ENCODE measurements at regions of chr1 and their contacts with region 1.

Region 1: GRCh38 chr1:44072204-44072603 is 40.9 kb upstream of the SLC6A9 start:
- DNase-seq: peak in 1 of 2 experiments; percentile 40
- H3K4me3 ChIP-seq: no peak overlapping the region
- H3K27ac ChIP-seq: no peak overlapping the region
- H3K4me1 ChIP-seq: peaks cover 19% of the 10 kb centered on the region
- H3K27me3 ChIP-seq: no peaks in the 10 kb centered on the region
- CTCF ChIP-seq: no peak

Region 2: GRCh38 chr1:44012941-44013609 is 59.1 kb before region 1 on chr1:
- CTCF ChIA-PET with region 1: no interaction called
- POLR2A ChIA-PET with region 1: no interaction called
- intact Hi-C with region 1: no loop called
- DNase-seq: no peak
- H3K4me3 ChIP-seq: no peak overlapping the region
- H3K27ac ChIP-seq: no peak overlapping the region
- H3K4me1 ChIP-seq: no peaks in the 10 kb centered on the region
- H3K27me3 ChIP-seq: no peaks in the 10 kb centered on the region
- CTCF ChIP-seq: no peak

Region 3: DNA sequence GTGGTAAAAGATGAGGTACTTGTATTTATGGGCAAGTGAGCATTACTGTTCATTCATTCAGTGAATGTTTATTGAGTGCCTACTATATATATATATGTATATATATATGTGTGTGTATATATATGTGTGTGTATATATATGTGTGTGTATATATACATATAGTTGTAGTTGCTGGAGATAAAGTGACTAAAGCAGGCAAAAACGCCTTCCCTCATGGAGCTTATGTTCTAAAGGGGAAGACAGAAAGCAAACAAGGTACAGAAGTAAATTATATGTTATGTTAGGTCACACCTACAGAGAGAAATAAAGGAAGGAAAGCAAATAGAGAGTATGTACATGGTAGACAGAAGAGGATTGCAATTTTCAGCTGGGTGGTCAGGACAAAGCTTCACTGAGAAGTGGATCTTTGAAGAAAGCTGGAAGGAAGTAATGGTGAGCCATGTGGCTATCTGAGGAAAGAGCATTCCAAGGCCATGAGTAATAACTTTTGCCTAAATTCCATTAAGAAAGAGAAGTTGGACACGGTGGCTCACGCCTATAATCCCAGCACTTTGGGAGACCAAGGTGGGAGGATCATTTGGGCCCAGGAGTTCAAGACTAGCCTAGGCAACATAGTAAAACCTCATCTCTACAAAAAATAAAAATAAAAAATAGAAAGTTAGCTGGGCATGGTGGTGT is 12.9 kb after region 1 on chr1:
- CTCF ChIA-PET with region 1: no interaction called
- POLR2A ChIA-PET with region 1: interaction called, 16 read pairs
- intact Hi-C with region 1: no loop called
- DNase-seq: peak; percentile 26 to 79
- H3K4me3 ChIP-seq: no peak overlapping the region
- H3K27ac ChIP-seq: no peak overlapping the region
- H3K4me1 ChIP-seq: peaks cover 7% of the 10 kb centered on the region; the same call in 1 of the 2 replicates
- H3K27me3 ChIP-seq: no peaks in the 10 kb centered on the region
- CTCF ChIP-seq: no peak

Region 4: DNA sequence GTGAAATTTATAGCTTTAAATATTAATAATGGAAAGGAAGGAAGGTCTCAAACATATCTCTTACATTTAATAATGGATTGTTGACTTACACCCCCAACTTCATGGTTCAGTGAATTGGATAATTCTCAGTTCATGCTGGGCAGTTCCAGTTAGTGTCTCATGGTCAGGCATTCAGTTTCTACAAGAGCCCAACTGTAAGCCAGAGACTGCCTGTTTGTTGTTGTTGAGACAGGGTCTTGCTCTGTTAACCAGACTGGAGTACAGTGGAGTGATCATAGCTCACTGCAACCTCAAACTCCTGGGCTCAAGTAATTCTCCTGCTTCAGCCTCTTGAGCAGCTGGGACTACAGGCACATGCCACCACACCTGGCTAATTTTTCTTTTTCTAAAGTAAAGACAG is 136.0 kb after region 1 on chr1:
- CTCF ChIA-PET with region 1: interaction called, 10 read pairs
- POLR2A ChIA-PET with region 1: no interaction called
- intact Hi-C with region 1: no loop called
- DNase-seq: no peak
- H3K4me3 ChIP-seq: no peak overlapping the region
- H3K27ac ChIP-seq: no peak overlapping the region
- H3K4me1 ChIP-seq: peaks cover 11% of the 10 kb centered on the region; the same call in 1 of the 2 replicates
- H3K27me3 ChIP-seq: no peaks in the 10 kb centered on the region
- CTCF ChIP-seq: no peak

Region 5: DNA sequence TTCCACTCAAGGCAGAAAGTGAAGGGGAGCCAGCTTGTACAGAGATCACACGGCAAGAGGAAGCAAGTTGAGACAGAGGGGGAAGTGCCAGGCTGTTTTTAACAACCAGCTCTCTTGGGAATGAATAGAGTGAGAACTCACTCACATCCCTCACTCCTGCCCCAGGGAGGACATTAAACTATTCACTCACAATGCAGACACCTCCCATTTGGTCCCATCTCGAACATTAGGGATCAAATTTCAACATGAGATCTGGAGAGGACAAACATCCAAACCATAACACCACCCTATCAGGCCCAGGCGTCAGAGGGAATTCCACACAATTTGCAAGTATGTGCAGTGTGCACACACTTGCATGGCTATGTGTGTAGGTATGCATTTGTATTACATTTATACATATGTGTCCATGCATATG is 203.8 kb after region 1 on chr1:
- CTCF ChIA-PET with region 1: no interaction called
- POLR2A ChIA-PET with region 1: interaction called, 10 read pairs
- intact Hi-C with region 1: no loop called
- DNase-seq: no peak
- H3K4me3 ChIP-seq: no peak overlapping the region
- H3K27ac ChIP-seq: no peak overlapping the region
- H3K4me1 ChIP-seq: no peaks in the 10 kb centered on the region
- H3K27me3 ChIP-seq: no peaks in the 10 kb centered on the region
- CTCF ChIP-seq: no peak